ENCODE measurements at regions of chr2 and their contacts with region 1.

Region 1: GRCh38 chr2:69177785-69178636 is 165.0 kb downstream of the ANTXR1 start:
- DNase-seq: peak; percentile 93 to 97
- H3K4me3 ChIP-seq: peak overlapping the region; percentile 26 to 32
- H3K27ac ChIP-seq: peak overlapping the region; percentile 92 to 96
- H3K4me1 ChIP-seq: peaks cover 13 to 41% of the 10 kb centered on the region in 2 donors
- H3K27me3 ChIP-seq: no peaks in the 10 kb centered on the region
- CTCF ChIP-seq: no peak

Region 2: GRCh38 chr2:68548396-68548795 is 629.6 kb before region 1 on chr2:
- intact Hi-C with region 1: no loop called
- DNase-seq: no peak
- H3K4me3 ChIP-seq: no peak overlapping the region
- H3K27ac ChIP-seq: no peak overlapping the region
- H3K4me1 ChIP-seq: no peaks in the 10 kb centered on the region
- H3K27me3 ChIP-seq: no peaks in the 10 kb centered on the region
- CTCF ChIP-seq: no peak

Region 3: DNA sequence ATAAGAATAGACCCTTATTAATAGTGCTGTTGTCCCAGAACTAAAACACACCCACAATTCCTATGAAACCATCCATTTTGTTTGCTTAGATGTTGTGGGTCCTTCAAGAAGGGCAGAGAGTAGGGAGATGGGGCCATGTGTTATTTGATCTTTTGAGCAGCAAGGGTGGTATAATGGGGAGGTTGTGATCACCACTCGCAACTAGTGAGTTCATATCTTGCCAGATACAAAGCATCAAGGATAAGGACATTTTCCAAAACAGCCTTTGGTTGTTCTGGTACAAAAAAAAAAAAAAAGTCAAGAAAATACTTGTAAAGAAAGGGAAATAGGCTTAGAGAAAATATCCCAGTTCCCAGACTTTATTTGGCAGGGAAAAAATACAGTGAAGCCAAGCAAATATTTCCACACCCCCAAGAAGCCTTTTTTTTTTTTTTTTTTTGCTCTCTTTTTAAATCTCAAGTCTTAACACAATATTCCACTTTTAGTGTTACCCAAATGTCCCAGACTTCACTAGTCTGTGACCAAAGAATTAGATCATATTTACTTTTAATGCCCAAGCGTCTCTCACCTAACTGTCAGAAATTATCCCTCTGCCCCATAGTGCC is 110.9 kb before region 1 on chr2:
- intact Hi-C with region 1: loop called (anchors 5 kb)
- DNase-seq: no peak
- H3K4me3 ChIP-seq: no peak overlapping the region
- H3K27ac ChIP-seq: peak overlapping the region; percentile 92
- H3K4me1 ChIP-seq: peaks cover 14 to 56% of the 10 kb centered on the region in 2 donors
- H3K27me3 ChIP-seq: no peaks in the 10 kb centered on the region
- CTCF ChIP-seq: no peak

Region 4: GRCh38 chr2:69163109-69163508 is 14.9 kb before region 1 on chr2:
- intact Hi-C with region 1: loop called (anchors 2 kb)
- DNase-seq: peak in 1 of 2 donors; percentile 75
- H3K4me3 ChIP-seq: peak overlapping the region; percentile 8 to 32
- H3K27ac ChIP-seq: peak overlapping the region; percentile 83 to 86
- H3K4me1 ChIP-seq: peaks cover 10 to 59% of the 10 kb centered on the region in 2 donors
- H3K27me3 ChIP-seq: no peaks in the 10 kb centered on the region
- CTCF ChIP-seq: no peak

Region 5: DNA sequence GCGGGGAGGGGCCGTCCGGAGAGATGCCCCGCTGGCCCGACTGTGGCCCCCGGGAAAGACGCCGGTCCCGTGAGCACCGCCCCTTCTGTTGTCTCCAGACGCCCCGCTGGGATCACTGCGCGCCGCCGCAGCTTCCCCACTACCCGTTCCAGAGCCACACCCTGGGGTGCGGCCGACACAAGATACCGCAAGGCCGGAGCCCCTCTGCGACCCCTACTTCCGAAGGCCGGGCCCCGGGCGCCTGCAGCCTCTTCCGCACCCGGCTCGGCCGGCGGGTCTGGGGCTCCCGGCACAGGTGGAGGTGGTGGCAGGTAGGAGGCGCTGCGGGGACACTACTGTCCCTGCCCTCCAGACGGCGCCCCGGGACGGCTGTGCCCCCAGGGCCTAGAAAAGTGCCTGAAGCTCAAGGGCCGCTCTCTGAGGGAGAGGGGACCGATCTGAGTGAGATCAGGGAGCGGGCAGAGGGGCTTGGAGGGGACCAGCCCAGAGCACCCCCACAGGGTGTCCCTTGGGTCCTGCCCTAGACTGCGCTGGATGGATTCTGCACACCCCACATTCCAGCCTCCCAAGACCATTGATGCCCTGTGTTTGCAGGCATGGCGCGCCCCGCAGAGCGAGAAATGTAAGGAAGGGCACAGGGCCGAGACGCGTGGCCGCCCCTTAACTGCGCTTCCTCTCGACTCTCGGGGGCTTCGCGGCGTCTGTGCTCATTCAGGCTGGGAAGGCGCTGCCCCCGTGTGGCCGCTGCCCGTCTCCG is 129.0 kb after region 1 on chr2:
- intact Hi-C with region 1: loop called (anchors 2 kb)
- DNase-seq: peak; percentile 33 to 92
- H3K4me3 ChIP-seq: peak overlapping the region; percentile 64 to 75
- H3K27ac ChIP-seq: peak overlapping the region; percentile 81 to 82
- H3K4me1 ChIP-seq: peaks cover 4 to 42% of the 10 kb centered on the region in 2 donors
- H3K27me3 ChIP-seq: no peaks in the 10 kb centered on the region
- CTCF ChIP-seq: peak; percentile 78 to 89 (median 86)

Region 6: DNA sequence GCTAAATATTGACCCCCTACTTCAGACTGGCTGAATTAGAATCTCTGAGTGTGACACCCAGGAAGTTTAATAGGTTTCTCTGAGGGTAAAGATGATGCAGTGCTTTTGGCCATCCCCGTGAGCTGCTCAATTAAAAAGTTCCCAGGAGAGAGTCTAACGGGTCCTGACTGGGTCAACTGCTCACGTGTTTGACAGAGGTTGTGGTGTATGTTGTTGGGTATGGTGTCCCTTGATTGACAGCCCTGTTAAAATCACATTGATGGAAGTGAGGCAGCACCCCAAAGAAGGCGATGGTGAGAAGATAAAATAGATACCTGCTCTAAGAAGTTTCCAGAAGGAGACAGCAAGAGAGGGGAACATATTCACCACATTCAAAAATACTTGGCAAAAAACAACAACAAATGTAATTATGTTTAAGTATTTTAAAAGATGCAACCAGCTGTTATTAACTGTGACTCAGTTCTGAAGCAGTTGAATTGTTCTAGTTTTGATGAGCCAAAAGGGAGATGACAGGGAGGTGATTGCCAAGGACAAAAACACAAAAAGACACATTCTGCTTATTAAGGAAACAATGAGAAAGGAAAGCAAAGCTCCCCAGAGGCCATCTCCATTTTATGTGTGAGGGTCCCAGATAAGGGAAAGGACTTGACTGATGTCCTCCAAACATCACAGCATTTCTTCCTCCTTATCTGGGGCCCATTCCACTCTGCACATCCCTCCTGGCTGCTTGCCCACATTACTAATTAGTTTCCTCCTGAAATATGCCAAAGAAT is 639.9 kb after region 1 on chr2:
- intact Hi-C with region 1: no loop called
- DNase-seq: no peak
- H3K4me3 ChIP-seq: no peak overlapping the region
- H3K27ac ChIP-seq: no peak overlapping the region
- H3K4me1 ChIP-seq: peaks cover 0 to 3% of the 10 kb centered on the region in 2 donors
- H3K27me3 ChIP-seq: no peaks in the 10 kb centered on the region
- CTCF ChIP-seq: no peak